ENCODE measurements at regions of chr2 and their contacts with region 1.

Region 1: DNA sequence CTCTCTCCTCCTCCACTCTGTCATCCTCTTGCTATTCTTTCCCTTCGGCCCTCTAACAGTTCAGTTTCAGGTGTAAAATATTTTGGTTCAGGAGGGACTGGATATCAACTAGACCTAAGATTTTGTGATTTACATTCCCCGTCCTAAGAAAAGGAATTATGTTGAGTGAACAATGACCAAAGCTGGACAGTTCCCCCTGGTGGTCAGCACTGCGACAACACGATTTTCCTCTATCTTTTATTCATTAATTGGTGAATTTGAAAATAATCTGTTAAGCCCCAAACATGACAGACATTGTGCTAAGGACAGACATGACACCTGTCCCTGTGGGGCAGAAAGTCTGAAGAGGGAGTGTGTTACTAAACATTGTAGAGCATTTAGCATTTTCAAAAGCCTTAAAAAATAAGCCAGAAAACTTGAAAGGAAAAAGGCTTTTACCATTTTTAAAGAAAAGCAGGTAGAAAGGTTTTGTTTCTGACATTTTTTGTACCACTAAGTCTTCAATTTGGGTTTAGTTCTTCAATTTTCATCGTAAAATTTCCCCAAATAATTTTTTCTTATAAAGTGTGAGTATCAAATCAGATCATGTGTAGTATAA is 28.4 kb upstream of the GTF2A1L start:
- DNase-seq: peak; percentile 59
- ATAC-seq: no peak
- H3K4me3 Mint-ChIP-seq: no peak overlapping the region
- H3K27ac Mint-ChIP-seq: no peak overlapping the region
- H3K4me1 Mint-ChIP-seq: peaks cover 37% of the 10 kb centered on the region
- H3K27me3 Mint-ChIP-seq: peaks cover 16% of the 10 kb centered on the region
- CTCF ChIP-seq: peak; percentile 82

Region 2: GRCh38 chr2:48272199-48272598 is 317.1 kb before region 1 on chr2:
- CTCF ChIA-PET with region 1: no interaction called
- POLR2A ChIA-PET with region 1: no interaction called
- DNase-seq: no peak
- ATAC-seq: no peak
- H3K4me3 Mint-ChIP-seq: no peak overlapping the region
- H3K27ac Mint-ChIP-seq: no peak overlapping the region
- H3K4me1 Mint-ChIP-seq: no peaks in the 10 kb centered on the region; the same call in 1 of the 2 replicates
- H3K27me3 Mint-ChIP-seq: no peaks in the 10 kb centered on the region
- CTCF ChIP-seq: no peak

Region 3: DNA sequence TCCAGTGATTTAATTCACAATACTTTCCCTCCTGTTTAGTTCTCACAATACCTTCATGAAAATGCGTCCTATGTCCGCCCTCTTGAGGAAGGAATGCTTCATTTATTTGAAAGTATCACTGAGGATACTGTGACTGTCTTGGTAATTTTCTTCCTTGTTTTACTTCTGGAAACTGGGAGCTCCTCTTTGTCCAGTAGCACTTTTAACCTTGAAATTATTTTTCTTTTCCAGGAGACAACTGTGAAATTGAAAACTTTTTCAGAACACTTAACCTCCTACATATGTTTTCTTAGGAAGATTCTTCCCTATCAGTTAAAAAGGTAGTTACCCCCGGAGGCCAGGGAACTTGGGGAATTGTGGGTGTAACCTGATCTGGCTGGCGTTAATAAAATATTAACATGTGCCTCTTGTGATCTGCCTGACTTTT is 118.2 kb before region 1 on chr2:
- CTCF ChIA-PET with region 1: interaction called, 19 read pairs
- POLR2A ChIA-PET with region 1: no interaction called
- DNase-seq: no peak
- ATAC-seq: peak; percentile 93
- H3K4me3 Mint-ChIP-seq: no peak overlapping the region
- H3K27ac Mint-ChIP-seq: peak overlapping the region; percentile 97
- H3K4me1 Mint-ChIP-seq: peaks cover 10% of the 10 kb centered on the region
- H3K27me3 Mint-ChIP-seq: no peaks in the 10 kb centered on the region
- CTCF ChIP-seq: peak; percentile 72

Region 4: GRCh38 chr2:48530033-48530804 is 59.0 kb before region 1 on chr2 and contains the start of gene STON1:
- CTCF ChIA-PET with region 1: interaction called, 15 read pairs
- POLR2A ChIA-PET with region 1: no interaction called
- DNase-seq: peak; percentile 36
- ATAC-seq: peak; percentile 54
- H3K4me3 Mint-ChIP-seq: peak within 1 kb of the TSS; percentile 86
- H3K27ac Mint-ChIP-seq: peak within 1 kb of the TSS; percentile 48; the same call in 1 of the 2 replicates
- H3K4me1 Mint-ChIP-seq: peaks cover 38% of the 10 kb centered on the region
- H3K27me3 Mint-ChIP-seq: no peaks in the 10 kb centered on the region
- CTCF ChIP-seq: no peak
- total RNA-seq, gene STON1: 11.0 to 13.5 TPM (median 13.4 TPM) in 3 replicates

Region 5: DNA sequence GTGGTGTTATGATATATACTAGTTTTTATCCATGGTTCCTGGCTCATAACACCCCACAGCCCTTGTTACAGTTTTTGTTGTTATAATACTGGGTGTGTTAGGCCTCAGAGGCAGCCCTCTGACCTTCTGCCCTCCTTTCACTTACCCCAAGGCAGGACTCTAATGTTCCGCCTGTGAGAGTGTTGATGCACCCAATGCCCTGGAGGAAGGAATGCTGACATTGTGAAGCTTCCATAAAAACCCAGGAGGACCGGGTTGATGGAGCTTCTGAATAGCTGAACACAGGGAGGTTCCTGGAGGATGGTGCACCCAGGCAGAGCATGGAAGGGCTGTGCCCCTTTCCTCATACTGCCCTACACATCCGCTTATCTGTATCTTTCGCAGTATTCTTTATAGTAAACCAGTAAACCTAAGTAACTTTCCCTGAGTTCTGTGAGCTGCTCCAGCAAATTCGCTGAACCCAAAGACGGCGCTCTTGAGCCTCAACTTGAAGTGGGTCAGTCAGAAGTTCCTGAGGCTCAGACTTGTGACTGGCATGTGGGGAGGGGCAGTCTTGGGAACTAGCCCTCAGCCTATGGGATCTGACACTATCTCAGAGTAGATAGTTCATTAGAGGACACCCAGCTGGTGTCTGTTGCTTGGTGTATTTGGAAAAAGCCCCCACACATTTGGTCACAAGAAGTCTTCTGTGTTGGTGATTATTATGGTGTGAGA is 48.9 kb before region 1 on chr2:
- CTCF ChIA-PET with region 1: interaction called, 15 read pairs
- POLR2A ChIA-PET with region 1: no interaction called
- DNase-seq: no peak
- ATAC-seq: peak; percentile 68
- H3K4me3 Mint-ChIP-seq: no peak overlapping the region
- H3K27ac Mint-ChIP-seq: no peak overlapping the region
- H3K4me1 Mint-ChIP-seq: peaks cover 10% of the 10 kb centered on the region
- H3K27me3 Mint-ChIP-seq: no peaks in the 10 kb centered on the region
- CTCF ChIP-seq: no peak

Region 6: GRCh38 chr2:48600204-48600813 is 11.0 kb after region 1 on chr2:
- CTCF ChIA-PET with region 1: interaction called, 12 read pairs
- POLR2A ChIA-PET with region 1: no interaction called
- DNase-seq: no peak
- ATAC-seq: peak; percentile 16; the same call in 1 of the 2 replicates
- H3K4me3 Mint-ChIP-seq: no peak overlapping the region
- H3K27ac Mint-ChIP-seq: no peak overlapping the region
- H3K4me1 Mint-ChIP-seq: peaks cover 4% of the 10 kb centered on the region
- H3K27me3 Mint-ChIP-seq: no peaks in the 10 kb centered on the region
- CTCF ChIP-seq: peak; percentile 35; the same call in 1 of the 2 replicates

Region 7: GRCh38 chr2:48738806-48739205 is 149.5 kb after region 1 on chr2:
- CTCF ChIA-PET with region 1: no interaction called
- POLR2A ChIA-PET with region 1: no interaction called
- DNase-seq: no peak
- ATAC-seq: no peak
- H3K4me3 Mint-ChIP-seq: no peak overlapping the region
- H3K27ac Mint-ChIP-seq: no peak overlapping the region
- H3K4me1 Mint-ChIP-seq: no peaks in the 10 kb centered on the region; the same call in 1 of the 2 replicates
- H3K27me3 Mint-ChIP-seq: no peaks in the 10 kb centered on the region; the same call in 1 of the 2 replicates
- CTCF ChIP-seq: no peak

Measured in WTC11 (cell line).